ENCODE measurements at regions of chr17 and their contacts with region 1.

Region 1: DNA sequence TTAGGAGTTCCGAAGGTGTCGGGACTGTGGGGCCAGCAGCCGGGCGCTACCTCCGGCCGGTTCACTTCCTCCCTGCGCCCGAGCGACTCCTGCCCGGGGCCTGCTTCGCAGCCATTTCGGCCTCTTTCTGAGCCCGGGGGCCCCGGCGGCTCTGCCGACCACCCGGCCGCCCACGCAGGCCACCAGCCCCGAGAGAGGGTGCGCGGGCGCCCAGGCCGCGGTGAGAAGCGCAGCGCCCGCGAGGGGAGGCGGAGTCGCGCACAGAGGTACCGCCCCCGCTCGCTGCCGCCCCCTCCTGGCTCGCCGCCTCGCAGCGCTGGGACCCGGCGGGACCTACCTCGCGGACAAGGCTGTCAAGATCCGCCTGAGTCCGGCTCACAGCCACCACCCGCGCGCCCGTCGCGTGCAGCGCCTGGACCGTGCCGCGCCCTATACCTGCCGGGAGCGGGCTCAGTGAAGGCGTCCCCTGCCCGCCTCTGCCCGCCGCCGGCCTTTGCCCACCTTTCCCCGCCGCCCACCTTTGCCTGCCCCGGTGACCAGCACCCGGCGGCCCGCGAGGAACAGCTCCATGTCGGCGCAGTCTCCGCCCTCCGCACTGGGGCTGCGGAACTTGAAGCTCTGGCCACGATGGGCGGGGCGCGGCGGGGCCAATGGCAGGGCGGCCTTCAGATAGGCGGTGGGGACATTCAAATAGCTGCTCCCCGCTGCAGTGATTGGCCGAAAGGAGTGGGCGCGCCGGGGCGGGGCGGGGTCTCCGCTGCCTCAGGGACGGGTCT is at the start of gene DCXR:
- DNase-seq: peak; percentile 97 to 98
- ATAC-seq: peak; percentile 97 to 99
- H3K4me3 ChIP-seq: peak within 1 kb of the TSS; percentile 63 to 89 (median 78)
- H3K27ac ChIP-seq: peak within 1 kb of the TSS; percentile 85 to 99 (median 95)
- H3K4me1 ChIP-seq: peaks cover 9 to 22% of the 10 kb centered on the region in 2 donors
- H3K27me3 ChIP-seq: peaks cover 2 to 8% (median 5%) of the 10 kb centered on the region in 3 donors
- CTCF ChIP-seq: peak; percentile 49 to 85 (median 78)
- POLR2A ChIP-seq: peak; percentile 98 to 99
- total RNA-seq, gene DCXR: 130 to 296 (median 223) TPM

Region 2: DNA sequence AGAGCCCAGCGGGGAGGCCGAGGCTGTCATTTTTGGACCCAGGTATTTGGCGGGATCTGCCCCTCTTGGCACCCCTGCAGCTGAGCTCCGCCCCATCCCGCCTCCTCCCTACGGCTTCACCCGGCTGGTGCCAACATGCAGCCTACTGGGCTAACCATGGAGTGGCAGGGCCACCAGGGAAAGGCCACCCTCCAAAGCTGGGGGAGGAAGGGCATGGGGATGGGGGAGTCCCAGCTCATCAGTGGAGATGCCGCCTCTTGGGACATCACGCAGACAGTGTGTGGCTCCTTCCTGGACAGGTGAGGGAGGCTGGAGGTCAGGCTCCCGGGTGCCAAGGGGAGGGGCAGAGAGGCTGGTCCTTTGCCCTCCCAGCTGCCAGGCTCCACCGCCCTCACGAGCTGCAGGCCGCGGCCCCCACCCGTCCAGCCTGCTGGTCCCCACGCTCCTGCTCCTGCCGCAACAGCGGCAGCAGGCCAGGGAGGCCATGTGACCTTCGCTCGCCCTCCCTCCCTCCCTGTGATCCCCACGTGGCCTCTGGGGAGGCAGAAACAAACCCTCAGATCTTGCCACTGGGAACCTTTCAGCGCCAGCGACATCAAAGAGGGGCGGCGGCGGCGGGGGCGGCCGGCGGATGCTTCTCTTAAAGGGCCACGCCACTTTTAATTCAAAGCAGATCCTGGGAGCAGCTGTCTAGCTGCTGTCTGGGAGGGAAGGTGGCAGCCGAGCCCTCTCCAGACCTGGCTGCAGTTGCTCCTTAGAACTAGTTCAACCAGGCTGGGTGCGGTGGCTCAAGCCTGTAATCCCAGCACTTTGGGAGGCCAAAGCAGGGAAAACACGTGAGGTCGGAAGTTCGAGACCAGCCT is 69.5 kb before region 1 on chr17:
- in situ Hi-C with region 1: no loop called
- intact Hi-C with region 1: no loop called
- DNase-seq: peak; percentile 55 to 78
- ATAC-seq: peak; percentile 79 to 82
- H3K4me3 ChIP-seq: peak overlapping the region; percentile 11 to 51 (median 40)
- H3K27ac ChIP-seq: peak overlapping the region in 3 of 4 donors; percentile 59 to 82 (median 69)
- H3K4me1 ChIP-seq: peaks cover 7 to 19% of the 10 kb centered on the region in 2 donors
- H3K27me3 ChIP-seq: peaks cover 0 to 3% (median 0%) of the 10 kb centered on the region in 3 donors
- CTCF ChIP-seq: no peak
- POLR2A ChIP-seq: peak; percentile 14 to 22

Region 3: GRCh38 chr17:82022981-82023374 is 14.3 kb before region 1 on chr17 and contains the start of gene LRRC45:
- in situ Hi-C with region 1: no loop called
- intact Hi-C with region 1: loop called (anchors 1 kb)
- DNase-seq: peak; percentile 100
- ATAC-seq: peak; percentile 86 to 91
- H3K4me3 ChIP-seq: peak within 1 kb of the TSS; percentile 89 to 92 (median 92)
- H3K27ac ChIP-seq: peak within 1 kb of the TSS; percentile 78 to 86 (median 79)
- H3K4me1 ChIP-seq: peaks cover 25 to 55% of the 10 kb centered on the region in 2 donors
- H3K27me3 ChIP-seq: no peaks in the 10 kb centered on the region
- CTCF ChIP-seq: no peak
- POLR2A ChIP-seq: no peak
- total RNA-seq, gene LRRC45: 1.1 to 5.0 (median 3.8) TPM

Region 4: GRCh38 chr17:82098072-82098821 is 60.9 kb after region 1 on chr17 and contains the start of gene FASN:
- in situ Hi-C with region 1: no loop called
- intact Hi-C with region 1: loop called (anchors 1 kb)
- DNase-seq: peak; percentile 75 to 90
- ATAC-seq: peak; percentile 68 to 71
- H3K4me3 ChIP-seq: peak within 1 kb of the TSS; percentile 61 to 93 (median 72)
- H3K27ac ChIP-seq: peak within 1 kb of the TSS; percentile 81 to 96 (median 90)
- H3K4me1 ChIP-seq: peaks cover 30 to 32% of the 10 kb centered on the region in 2 donors
- H3K27me3 ChIP-seq: no peaks in the 10 kb centered on the region
- CTCF ChIP-seq: peak in 4 of 5 experiments; percentile 28 to 43 (median 36)
- POLR2A ChIP-seq: peak; percentile 82 to 97
- total RNA-seq, gene FASN: 16.3 to 34.5 (median 26.3) TPM

Region 5: DNA sequence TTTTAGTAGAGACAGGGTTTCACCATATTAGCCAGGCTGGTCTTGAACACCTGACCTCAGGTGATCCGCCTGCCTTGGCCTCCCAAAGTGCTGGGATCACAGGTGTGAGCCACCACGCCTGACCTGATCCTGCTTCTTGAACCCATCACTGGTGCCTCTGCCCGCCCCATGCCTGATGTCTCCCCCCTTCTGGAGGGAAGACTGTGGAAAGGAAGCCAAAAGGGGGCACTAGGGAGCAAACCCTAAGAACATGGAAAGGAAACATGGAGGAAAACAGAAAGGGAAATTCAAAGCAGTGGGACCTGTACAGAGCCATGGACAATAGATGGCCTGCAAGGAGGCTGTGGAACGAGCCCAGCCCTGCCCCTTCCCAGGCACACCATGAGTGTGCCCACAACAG is 91.8 kb after region 1 on chr17:
- in situ Hi-C with region 1: loop called in 1 of 4 experiments (anchors 25 kb)
- intact Hi-C with region 1: no loop called
- DNase-seq: no peak
- ATAC-seq: no peak
- H3K4me3 ChIP-seq: no peak overlapping the region
- H3K27ac ChIP-seq: no peak overlapping the region
- H3K4me1 ChIP-seq: peaks cover 0 to 3% of the 10 kb centered on the region in 2 donors
- H3K27me3 ChIP-seq: no peaks in the 10 kb centered on the region
- CTCF ChIP-seq: no peak
- POLR2A ChIP-seq: no peak

Region 6: GRCh38 chr17:82153745-82154375 is 116.6 kb after region 1 on chr17:
- in situ Hi-C with region 1: loop called (anchors 10 to 25 kb)
- intact Hi-C with region 1: no loop called
- DNase-seq: peak; percentile 66 to 80
- ATAC-seq: peak; percentile 78
- H3K4me3 ChIP-seq: no peak overlapping the region
- H3K27ac ChIP-seq: peak overlapping the region in 2 of 4 donors; percentile 80 to 81
- H3K4me1 ChIP-seq: peaks cover 17 to 20% of the 10 kb centered on the region in 2 donors
- H3K27me3 ChIP-seq: no peaks in the 10 kb centered on the region
- CTCF ChIP-seq: peak; percentile 89 to 96 (median 93)
- POLR2A ChIP-seq: no peak

Region 7: DNA sequence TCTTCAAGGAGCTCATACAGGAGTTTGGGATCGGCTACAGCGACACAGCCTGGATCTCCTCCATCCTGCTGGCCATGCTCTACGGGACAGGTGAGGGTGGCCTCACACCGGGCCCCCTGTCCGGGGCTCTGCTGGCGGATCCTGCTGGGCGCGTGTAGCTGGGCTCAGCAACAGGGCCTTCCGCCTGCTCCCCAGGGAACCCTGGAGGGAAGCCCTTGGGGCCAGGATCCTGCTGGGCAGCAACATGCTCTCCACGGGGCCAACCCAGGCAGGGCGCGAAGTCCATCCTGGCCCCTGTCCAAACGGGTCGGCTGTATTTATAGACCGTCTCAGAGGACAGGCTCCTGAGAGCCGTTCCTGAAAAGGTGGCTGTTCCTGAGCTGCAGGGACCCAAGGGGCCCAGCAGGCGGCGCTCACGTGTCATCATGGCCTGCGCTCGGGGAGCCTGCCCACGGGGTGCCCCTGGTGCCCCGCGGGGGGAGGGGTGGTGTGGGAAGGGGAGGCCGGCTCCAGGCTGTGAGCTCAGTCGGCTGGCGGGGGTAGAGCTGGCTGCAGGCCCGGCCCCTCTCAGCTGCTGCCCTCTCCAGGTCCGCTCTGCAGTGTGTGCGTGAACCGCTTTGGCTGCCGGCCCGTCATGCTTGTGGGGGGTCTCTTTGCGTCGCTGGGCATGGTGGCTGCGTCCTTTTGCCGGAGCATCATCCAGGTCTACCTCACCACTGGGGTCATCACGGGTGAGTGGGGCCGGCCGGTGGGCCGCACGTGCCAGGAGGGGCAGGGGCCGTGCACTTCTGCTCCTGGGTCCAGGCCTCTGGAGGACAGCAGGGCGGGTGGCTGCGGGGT is 199.1 kb after region 1 on chr17:
- in situ Hi-C with region 1: no loop called
- intact Hi-C with region 1: loop called (anchors 5 kb)
- DNase-seq: peak; percentile 80 to 96
- ATAC-seq: peak; percentile 30 to 51
- H3K4me3 ChIP-seq: peak overlapping the region; percentile 25 to 58 (median 50)
- H3K27ac ChIP-seq: peak overlapping the region; percentile 90 to 98 (median 93)
- H3K4me1 ChIP-seq: peaks cover 81 to 95% of the 10 kb centered on the region in 2 donors
- H3K27me3 ChIP-seq: no peaks in the 10 kb centered on the region
- CTCF ChIP-seq: peak; percentile 94 to 99 (median 98)
- POLR2A ChIP-seq: no peak

Measured in gastrocnemius medialis (tissue), 4 donors.